Activated T-helper 1 cell treated with anti-CD3 and anti-CD28 coated beads, Interleukin-12 subunit alpha, Interleukin-12 subunit beta, Interleukin-2, Interleukin-4 antibody, amounts not matched to agents 30 ng/mL and 10 ng/mL and 1 ng/mL, durations not matched to agents 14 hours and 24 hours and 36 hours (primary cell): ENCODE measurements at regions of chr7 and their contacts with region 1.

Region 1: GRCh38 chr7:140230861-140231770 is 54.3 kb upstream of the KDM7A start:
- DNase-seq: peak; percentile 45
- H3K4me3 Mint-ChIP-seq: peak overlapping the region; percentile 91
- H3K27ac Mint-ChIP-seq: peak overlapping the region; percentile 94
- H3K4me1 Mint-ChIP-seq: peaks cover 46% of the 10 kb centered on the region
- H3K27me3 Mint-ChIP-seq: no peaks in the 10 kb centered on the region

Region 2: GRCh38 chr7:140062528-140063299 is 168.4 kb before region 1 on chr7 and contains the start of gene PARP12:
- intact Hi-C with region 1: loop called (anchors 1 kb)
- DNase-seq: peak; percentile 88
- H3K4me3 Mint-ChIP-seq: peak within 1 kb of the TSS; percentile 82
- H3K27ac Mint-ChIP-seq: peak within 1 kb of the TSS; percentile 91
- H3K4me1 Mint-ChIP-seq: peaks cover 43% of the 10 kb centered on the region
- H3K27me3 Mint-ChIP-seq: peaks cover 5% of the 10 kb centered on the region
- total RNA-seq, gene PARP12: 62.0 and 63.7 TPM in 2 replicates

Region 3: DNA sequence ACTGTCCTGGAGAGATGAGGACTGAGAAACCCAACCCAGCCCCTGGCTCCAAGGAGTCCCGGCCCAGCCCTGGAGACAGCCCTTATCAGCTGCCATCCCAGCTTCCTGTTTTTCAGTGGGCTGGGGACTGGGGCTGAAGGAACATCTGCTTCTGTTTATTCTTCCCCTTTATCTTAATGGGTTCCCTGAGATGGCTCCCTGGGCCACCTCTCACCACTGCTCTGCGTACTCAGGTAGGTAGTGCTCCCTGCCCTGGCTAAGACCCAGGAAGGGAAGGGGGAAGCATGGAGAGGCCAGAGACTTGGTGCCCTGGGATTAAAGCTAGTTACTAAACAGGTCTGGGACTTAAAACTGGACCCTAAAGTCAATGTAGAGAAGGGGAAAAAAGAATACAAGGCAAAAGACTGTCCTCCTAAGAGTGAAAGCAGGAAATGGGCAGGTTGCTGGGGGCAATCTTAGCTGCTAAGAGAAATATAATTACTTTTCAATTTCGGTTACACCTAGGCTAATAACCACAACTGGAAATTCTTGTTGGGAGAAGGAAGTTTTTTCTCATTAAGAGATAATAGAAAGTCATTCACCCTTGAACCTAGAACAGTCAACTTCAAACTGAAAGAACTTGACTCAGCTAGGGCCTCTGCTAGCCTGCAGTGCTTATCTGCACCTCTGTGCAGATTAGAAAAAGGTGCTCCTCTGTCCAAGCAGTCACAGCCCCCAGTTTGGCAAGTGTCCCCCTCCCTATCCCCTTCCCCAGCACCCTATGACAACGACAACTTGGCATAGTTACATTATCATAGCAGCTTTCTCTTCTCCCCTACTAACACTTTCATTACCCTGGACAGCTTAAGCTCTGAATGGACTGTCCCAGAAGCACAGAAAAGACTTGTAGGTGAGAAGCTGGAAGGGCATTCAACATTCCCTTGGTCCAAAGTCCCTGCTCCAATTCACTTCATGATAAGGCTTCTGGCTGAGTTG is 11.2 kb after region 1 on chr7:
- intact Hi-C with region 1: loop called (anchors 1 kb)
- DNase-seq: no peak
- H3K4me3 Mint-ChIP-seq: no peak overlapping the region
- H3K27ac Mint-ChIP-seq: no peak overlapping the region
- H3K4me1 Mint-ChIP-seq: peaks cover 15% of the 10 kb centered on the region
- H3K27me3 Mint-ChIP-seq: no peaks in the 10 kb centered on the region

Region 4: DNA sequence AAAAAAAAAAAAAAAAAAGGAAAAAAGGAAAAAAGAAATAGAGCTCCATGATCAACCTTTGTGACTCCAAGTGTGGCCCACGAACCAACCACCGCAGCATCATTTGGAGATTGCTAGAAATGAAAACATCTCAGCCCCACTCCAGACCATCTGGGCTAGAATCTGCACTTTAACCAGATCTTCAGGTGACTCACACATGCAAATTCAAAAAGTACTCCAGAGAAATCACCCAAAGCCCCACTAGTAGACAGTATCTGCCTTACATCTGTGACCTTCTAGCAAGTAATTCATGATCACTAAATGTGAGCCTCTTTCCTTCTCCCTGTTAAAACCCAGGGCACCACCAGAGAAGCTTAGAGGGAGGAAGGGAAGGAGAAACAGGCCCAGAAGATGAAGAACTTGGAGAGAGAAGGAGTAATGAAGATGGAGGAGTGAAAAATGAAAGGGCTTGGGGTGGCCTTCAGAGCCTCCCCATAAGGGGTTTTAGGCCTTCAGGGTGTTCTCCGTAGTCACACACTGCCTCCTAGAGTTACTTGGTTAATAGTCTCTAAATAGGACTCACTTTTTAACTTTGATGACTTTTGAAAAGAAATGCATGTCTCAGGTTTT is 73.2 kb after region 1 on chr7:
- intact Hi-C with region 1: loop called (anchors 5 kb)
- DNase-seq: peak; percentile 27
- H3K4me3 Mint-ChIP-seq: no peak overlapping the region
- H3K27ac Mint-ChIP-seq: peak overlapping the region; percentile 78
- H3K4me1 Mint-ChIP-seq: peaks cover 21% of the 10 kb centered on the region
- H3K27me3 Mint-ChIP-seq: no peaks in the 10 kb centered on the region

Region 5: DNA sequence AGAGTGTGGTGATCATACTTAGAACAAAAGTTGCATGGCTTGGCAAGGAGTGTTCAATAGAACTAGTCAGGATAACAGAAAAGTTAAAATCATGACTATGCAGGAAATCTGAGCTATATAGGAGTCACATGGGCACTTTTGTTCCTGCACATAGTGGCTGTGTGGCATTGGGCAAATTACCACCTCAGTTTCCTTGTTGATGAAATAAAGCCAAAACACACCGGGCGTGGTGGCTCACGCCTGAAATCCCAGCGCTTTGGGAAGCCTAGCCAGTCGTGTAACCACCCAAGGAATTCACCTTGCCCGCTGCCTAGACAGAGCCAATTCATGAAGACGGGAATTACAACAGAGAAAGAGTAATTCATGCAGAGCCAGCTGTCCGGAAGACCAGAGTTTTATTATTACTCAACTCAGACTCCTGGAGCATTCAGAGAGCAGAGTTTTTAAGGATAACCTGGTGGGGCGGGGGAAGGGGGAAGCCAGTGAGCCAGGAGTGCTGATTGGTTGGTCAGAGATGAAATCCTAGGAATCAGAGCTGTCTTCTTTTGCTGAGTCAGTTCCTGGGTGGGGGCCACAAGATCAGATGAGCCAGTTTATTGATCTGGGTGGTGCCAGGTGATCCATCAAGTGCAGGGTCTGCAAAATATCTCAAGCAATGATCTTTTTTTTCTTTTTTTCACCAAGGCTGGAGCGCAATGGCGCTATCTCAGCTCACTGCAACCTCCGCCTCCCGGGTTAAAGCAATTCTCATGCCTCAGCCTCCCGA is 254.6 kb after region 1 on chr7:
- intact Hi-C with region 1: no loop called
- DNase-seq: no peak
- H3K4me3 Mint-ChIP-seq: no peak overlapping the region
- H3K27ac Mint-ChIP-seq: no peak overlapping the region
- H3K4me1 Mint-ChIP-seq: no peaks in the 10 kb centered on the region
- H3K27me3 Mint-ChIP-seq: peaks cover 8% of the 10 kb centered on the region

Region 6: DNA sequence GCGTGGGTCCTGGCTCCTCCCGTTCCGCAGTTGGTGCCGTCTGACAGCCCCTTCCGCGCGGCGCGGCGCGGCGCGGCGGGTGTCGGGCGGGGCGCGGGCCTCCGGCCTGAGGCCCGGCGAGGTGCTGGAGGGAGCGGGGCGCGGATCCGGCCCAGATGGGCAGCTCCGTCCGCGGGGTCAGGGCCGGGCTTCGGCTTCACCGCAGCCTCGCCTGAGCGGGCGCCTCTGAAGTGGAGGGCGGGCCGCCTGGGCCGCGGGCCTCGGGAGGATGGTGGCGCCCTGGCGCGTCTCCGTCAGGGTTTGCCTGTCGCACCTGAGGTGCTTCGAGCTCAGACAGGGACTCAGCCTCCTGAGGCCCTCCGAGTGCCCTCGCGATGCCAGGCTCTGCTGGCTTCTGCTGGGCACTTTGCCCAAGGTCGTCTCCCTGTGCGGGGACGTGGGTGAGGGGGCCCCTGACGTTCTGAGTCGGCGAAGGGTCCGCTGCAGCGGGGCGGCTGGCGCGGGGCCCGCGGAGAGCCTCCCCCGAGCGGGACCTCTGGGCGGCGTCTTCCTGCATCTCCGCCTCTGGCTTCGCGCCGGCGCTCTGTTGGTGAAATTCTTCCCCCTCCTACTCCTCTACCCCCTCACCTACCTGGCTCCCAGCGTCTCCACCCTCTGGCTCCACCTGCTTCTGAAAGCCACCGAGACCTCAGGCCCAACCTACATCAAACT is 442.1 kb after region 1 on chr7:
- intact Hi-C with region 1: loop called (anchors 5 kb)
- DNase-seq: peak; percentile 56
- H3K4me3 Mint-ChIP-seq: peak overlapping the region; percentile 88
- H3K27ac Mint-ChIP-seq: peak overlapping the region; percentile 89
- H3K4me1 Mint-ChIP-seq: peaks cover 27% of the 10 kb centered on the region
- H3K27me3 Mint-ChIP-seq: peaks cover 2% of the 10 kb centered on the region